A673 (cell line): ENCODE measurements at regions of chr22 and their contacts with region 1.

Region 1: GRCh38 chr22:20946080-20946986 is 20.7 kb upstream of the AIFM3 start:
- DNase-seq: no peak
- H3K4me3 ChIP-seq: no peak overlapping the region
- H3K27ac ChIP-seq: no peak overlapping the region
- H3K4me1 ChIP-seq: no peaks in the 10 kb centered on the region
- H3K27me3 ChIP-seq: no peaks in the 10 kb centered on the region
- CTCF ChIP-seq: no peak

Region 2: DNA sequence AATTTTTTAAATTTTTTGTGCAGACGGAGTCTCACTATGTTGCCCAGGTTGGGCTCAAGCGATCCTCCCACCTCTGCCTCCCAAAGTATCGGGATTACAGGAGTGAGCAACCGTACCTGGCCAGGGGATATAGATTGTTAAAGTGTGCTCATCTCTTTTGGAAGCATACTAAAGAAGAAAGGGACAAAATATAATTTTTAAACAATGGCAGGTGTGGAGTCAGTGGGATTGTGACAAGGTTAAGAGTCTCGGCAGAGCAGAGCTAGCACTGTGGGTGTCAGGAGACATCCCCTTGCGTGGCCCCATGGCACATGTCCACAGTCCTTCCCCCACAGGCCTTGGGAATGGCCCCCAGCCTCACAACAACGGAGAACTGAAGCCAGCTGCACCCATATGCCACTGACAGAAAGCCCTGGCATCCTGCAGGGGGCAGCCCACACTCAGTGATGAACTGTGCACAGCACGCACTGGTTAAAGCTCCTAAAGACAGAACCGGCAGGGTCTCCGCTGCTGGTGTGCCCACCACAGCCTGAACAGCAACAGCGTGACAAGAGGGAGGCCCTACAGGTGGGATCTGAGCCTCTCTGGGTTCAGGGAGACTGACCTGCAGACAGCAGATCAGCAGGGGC is 142.5 kb before region 1 on chr22:
- CTCF ChIA-PET with region 1: no interaction called
- POLR2A ChIA-PET with region 1: no interaction called
- intact Hi-C with region 1: loop called (anchors 10 kb)
- DNase-seq: peak; percentile 50
- H3K4me3 ChIP-seq: no peak overlapping the region
- H3K27ac ChIP-seq: no peak overlapping the region
- H3K4me1 ChIP-seq: no peaks in the 10 kb centered on the region
- H3K27me3 ChIP-seq: no peaks in the 10 kb centered on the region
- CTCF ChIP-seq: peak; percentile 65

Region 3: DNA sequence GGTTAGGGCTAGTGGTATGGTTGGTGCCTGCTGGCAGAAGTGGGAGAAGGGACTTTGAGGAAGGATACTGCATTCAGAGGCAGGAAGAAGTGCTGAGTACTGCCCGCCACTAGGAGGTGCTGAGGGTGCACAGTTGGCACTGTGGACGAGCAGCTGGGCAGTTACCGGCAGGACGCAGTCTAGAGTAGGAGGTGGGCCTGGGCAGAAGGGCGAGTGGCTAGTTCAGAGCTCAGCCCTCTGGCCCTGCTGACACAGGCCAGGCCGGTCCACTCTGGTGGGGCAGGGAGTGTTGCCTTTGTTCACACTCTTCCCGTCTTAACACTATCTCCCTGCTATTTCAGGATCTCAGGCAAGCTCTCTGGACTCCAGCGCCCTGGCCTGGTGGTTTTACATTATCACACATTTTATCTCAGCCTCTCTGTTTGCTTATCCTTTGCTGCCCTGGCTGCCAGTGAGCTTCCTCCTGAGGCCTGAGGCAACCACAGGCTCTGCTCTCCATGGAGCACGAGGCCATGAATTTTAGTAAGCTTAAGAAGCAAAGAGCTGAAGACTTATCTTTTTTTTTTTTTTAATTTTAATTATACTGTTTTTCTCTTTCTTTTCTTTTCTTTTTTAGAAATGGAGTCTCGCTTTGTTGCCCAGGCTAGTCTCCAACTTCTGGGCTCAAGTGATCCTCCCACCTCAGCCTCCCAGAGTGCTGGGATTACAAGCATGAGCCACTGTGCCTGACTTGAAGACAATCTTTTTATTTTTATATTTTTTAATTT is 60.6 kb before region 1 on chr22:
- CTCF ChIA-PET with region 1: no interaction called
- POLR2A ChIA-PET with region 1: no interaction called
- intact Hi-C with region 1: loop called (anchors 10 kb)
- DNase-seq: peak; percentile 63
- H3K4me3 ChIP-seq: no peak overlapping the region
- H3K27ac ChIP-seq: no peak overlapping the region
- H3K4me1 ChIP-seq: peaks cover 5% of the 10 kb centered on the region
- H3K27me3 ChIP-seq: no peaks in the 10 kb centered on the region
- CTCF ChIP-seq: peak; percentile 86

Region 4: DNA sequence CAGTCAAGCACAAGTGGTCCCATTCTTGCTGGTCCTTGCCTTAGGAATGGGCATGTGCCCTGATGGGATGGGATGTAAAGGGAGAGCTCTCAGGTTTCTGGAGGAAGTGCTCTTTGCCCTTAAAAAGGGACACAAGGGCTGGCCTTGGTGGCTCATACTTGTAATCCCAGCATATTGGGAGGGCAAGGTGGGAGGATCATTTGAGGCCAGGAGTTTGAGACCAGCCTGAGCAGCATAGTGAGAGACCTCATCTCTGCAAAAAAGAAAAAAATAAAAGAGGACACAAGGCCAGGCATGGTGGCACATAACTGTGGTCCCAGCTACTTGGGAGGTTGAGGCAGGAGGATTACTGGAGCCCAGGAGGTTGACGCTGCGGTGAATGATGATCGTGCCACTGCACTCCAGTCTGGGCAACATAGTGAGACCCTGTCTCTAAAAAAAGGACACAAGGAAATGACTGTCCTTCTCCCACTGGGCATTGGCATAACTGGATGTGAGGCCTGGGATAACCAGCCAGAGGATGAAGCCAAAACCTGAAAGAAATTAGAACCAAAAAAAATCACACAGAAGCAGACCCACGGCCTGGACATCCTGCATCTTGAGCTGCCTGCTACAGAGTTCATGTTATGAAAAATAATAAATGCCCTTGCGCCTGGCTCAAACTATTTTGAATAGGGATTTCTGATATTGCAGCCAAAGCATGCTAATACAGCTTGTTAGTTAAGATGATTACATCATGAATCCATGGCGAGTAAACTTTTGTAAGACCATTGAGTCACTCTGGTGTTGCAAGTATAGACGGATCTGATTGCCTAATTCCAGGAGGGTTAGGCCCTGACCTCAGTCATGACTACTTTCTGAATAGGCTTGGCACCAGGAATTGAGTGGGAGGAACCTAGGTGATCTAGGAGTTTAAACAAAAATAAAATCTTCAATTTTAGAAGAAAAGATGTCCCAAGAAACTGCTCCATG is 42.0 kb before region 1 on chr22:
- CTCF ChIA-PET with region 1: no interaction called
- POLR2A ChIA-PET with region 1: no interaction called
- intact Hi-C with region 1: no loop called
- DNase-seq: peak; percentile 17
- H3K4me3 ChIP-seq: no peak overlapping the region
- H3K27ac ChIP-seq: no peak overlapping the region
- H3K4me1 ChIP-seq: no peaks in the 10 kb centered on the region
- H3K27me3 ChIP-seq: no peaks in the 10 kb centered on the region
- CTCF ChIP-seq: no peak